HCT116 (cell line): ENCODE measurements at regions of chr20 and their contacts with region 1.

Region 1: DNA sequence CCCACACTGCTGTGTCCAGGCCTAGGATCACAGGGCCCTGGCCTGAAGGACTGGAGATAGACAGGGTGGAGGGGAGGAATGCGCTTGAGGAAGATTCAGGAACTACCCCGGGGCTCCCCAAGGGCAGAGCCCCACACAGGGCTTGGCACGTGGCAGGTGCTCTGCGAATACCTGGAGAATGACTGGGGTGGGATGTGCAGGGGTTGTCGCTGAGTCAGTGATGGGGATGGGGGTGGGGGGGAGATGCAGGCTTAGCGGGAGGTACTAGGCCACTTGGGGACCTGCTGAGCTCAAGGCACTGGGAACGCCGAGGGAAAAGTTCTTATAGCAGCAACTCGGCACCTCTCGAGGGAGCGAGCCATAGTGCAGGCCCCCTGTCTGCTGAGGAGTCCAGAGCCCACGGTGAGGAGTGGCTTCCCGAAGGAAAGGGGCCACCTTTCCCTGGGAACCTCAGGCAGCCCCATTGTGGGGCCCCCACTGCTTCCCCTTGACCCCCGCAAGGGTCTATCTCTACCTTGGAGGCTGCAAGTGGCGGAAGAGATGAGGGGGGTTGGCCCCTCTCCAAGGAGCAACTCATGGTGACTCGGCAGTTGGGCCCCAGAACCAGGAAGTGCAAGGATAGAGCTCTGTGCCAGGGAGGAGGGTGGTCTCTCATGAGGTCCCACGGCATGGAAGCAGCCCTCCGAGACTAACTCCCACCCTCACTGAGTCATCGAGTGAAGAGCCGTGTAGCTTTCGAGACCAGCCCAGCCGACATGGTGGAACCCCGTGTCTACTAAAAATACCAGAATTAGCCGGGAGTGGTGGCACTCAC is 33.1 kb downstream of the SRC start:
- DNase-seq: peak; percentile 29
- ATAC-seq: peak; percentile 56
- H3K4me3 ChIP-seq: peak overlapping the region; percentile 9 to 34
- H3K27ac ChIP-seq: peak overlapping the region; percentile 60
- H3K4me1 ChIP-seq: peaks cover 25 to 63% of the 10 kb centered on the region in 2 experiments
- H3K27me3 ChIP-seq: no peaks in the 10 kb centered on the region
- CTCF ChIP-seq: no peak
- POLR2A ChIP-seq: no peak
- RAD21 ChIP-seq: no peak

Region 2: GRCh38 chr20:37288091-37288490 is 90.9 kb before region 1 on chr20:
- CTCF ChIA-PET with region 1: no interaction called
- POLR2A ChIA-PET with region 1: interaction called, 10 read pairs
- RAD21 ChIA-PET with region 1: no interaction called
- intact Hi-C with region 1: loop called (anchors 5 kb)
- DNase-seq: no peak
- ATAC-seq: no peak
- H3K4me3 ChIP-seq: no peak overlapping the region
- H3K27ac ChIP-seq: no peak overlapping the region
- H3K4me1 ChIP-seq: peaks cover 7 to 29% of the 10 kb centered on the region in 2 experiments
- H3K27me3 ChIP-seq: no peaks in the 10 kb centered on the region
- CTCF ChIP-seq: no peak
- POLR2A ChIP-seq: no peak
- RAD21 ChIP-seq: no peak